Esophagus muscularis mucosa (tissue), 4 donors: ENCODE measurements at regions of chr4 and their contacts with region 1.

Region 1: GRCh38 chr4:15327311-15328298 is 100.2 kb upstream of the C1QTNF7 start:
- DNase-seq: no peak
- H3K4me3 ChIP-seq: no peak overlapping the region
- H3K27ac ChIP-seq: peak overlapping the region; percentile 13 to 50 (median 30)
- H3K4me1 ChIP-seq: peaks cover 0 to 8% (median 4%) of the 10 kb centered on the region in 4 donors
- H3K27me3 ChIP-seq: no peaks in the 10 kb centered on the region
- CTCF ChIP-seq: no peak
- EP300 ChIP-seq: no peak
- POLR2A ChIP-seq: no peak

Region 2: DNA sequence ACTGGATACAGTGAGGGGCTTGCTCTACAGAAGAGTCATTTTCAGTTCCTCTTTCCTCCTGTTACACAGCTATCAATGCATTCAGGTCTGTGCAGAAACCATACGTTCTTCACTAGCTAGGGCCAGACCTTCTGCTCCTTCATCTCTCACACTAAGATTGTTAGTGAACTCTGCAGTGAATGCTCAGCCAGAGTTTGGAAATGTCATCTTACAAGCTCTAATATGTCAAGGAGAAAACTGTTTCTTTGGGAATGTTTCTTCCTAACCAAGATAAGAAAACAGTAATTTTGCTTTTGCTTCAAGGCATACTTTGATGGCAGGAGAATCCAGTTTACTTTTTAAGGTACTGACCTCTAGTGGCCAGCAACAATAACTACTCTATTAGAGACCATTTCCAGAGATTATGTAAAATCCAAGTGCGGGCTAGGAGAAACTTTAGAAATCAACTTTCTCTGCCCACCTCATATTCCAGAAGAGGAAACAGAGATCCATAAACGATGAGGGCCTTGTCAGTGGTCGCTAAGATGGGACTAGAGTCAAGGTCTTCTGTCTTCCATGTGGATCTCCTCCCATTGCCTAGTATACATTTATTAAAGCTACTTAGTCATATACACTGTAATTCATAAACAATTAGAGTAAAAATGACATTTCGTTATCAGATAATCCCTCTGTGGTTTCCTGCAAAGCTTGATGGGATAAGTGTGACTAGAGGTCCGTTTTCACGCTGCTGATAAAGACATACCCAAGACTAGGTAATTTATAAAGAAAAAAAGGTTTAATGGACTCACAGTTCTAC is 130.0 kb after region 1 on chr4:
- intact Hi-C with region 1: loop called (anchors 10 kb)
- DNase-seq: peak; percentile 68
- H3K4me3 ChIP-seq: peak overlapping the region in 1 of 4 donors; percentile 13
- H3K27ac ChIP-seq: peak overlapping the region; percentile 48 to 69 (median 61)
- H3K4me1 ChIP-seq: peaks cover 17 to 38% (median 31%) of the 10 kb centered on the region in 4 donors
- H3K27me3 ChIP-seq: no peaks in the 10 kb centered on the region
- CTCF ChIP-seq: peak; percentile 75 to 76 (median 76)
- EP300 ChIP-seq: no peak
- POLR2A ChIP-seq: no peak